Endothelial cell of umbilical vein (primary cell): ENCODE measurements at regions of chr13 and their contacts with region 1.

Region 1: DNA sequence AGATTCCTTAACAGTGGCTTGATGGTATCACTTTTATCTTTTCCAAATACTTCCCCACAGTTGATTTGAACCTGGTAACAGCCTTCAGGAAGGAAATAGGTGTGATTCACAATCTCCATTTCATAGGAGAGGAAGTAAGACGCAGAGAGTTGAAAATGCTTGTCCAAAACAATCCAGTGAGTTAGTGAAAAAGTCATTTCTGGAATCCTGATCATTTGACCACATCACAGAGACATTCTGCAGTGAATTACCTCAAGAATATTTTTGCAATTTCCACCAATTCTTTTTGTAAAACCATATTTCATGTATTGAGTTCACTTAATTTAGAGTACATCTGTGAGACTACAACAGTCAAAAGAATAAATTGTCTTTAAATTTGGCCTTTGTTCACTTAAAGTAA is 292.8 kb downstream of the DCLK1 start:
- DNase-seq: peak; percentile 89
- H3K4me3 ChIP-seq: peak overlapping the region in 1 of 3 experiments; percentile 23
- H3K27ac ChIP-seq: peak overlapping the region; percentile 98
- H3K4me1 ChIP-seq: peaks cover 27% of the 10 kb centered on the region
- H3K27me3 ChIP-seq: no peaks in the 10 kb centered on the region
- CTCF ChIP-seq: no peak
- POLR2A ChIP-seq: peak; percentile 27

Region 2: GRCh38 chr13:35393886-35394285 is 444.5 kb before region 1 on chr13:
- CTCF ChIA-PET with region 1: no interaction called
- POLR2A ChIA-PET with region 1: no interaction called
- dilution Hi-C with region 1: no loop called
- intact Hi-C with region 1: loop called (anchors 10 kb)
- DNase-seq: peak; percentile 79
- H3K4me3 ChIP-seq: no peak overlapping the region
- H3K27ac ChIP-seq: no peak overlapping the region
- H3K4me1 ChIP-seq: peaks cover 34% of the 10 kb centered on the region
- H3K27me3 ChIP-seq: no peaks in the 10 kb centered on the region
- CTCF ChIP-seq: no peak
- POLR2A ChIP-seq: no peak

Region 3: DNA sequence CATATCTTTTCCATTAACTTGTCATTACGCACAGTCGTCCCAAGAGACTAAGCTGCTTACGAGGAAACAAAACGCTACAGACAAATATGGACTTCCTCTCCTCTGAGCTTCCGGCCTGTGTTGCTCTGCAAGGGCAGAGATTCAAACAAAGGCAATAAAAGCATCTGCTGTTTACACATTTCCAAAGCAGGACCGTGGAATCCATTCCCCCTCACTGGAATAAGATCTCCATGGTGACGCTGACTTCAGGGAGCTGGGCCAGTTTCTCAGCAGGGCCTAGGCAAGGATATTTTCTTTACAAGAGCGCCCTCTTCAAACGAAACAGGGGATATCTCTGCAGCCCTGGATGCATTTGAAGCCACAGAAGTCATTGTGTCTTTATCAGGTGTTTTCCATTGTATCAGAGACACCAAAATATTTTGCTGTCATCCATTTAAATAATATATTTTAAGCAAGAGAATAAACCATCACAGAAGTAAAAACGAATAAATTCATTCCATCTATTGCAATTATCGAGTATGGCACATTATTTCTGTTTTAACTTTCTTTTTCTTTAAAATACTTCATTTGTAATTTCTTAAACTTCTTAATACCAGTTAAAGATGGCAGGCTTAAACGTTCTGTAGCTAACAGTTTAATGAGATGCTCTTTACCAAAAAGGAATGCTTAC is 115.3 kb after region 1 on chr13:
- CTCF ChIA-PET with region 1: no interaction called
- POLR2A ChIA-PET with region 1: no interaction called
- dilution Hi-C with region 1: no loop called
- intact Hi-C with region 1: loop called (anchors 5 kb)
- DNase-seq: peak; percentile 79
- H3K4me3 ChIP-seq: no peak overlapping the region
- H3K27ac ChIP-seq: no peak overlapping the region
- H3K4me1 ChIP-seq: no peaks in the 10 kb centered on the region
- H3K27me3 ChIP-seq: no peaks in the 10 kb centered on the region
- CTCF ChIP-seq: peak; percentile 54 to 57
- POLR2A ChIP-seq: no peak

Region 4: GRCh38 chr13:36148446-36148845 is 310.1 kb after region 1 on chr13:
- CTCF ChIA-PET with region 1: no interaction called
- POLR2A ChIA-PET with region 1: no interaction called
- dilution Hi-C with region 1: no loop called
- intact Hi-C with region 1: loop called (anchors 1 kb)
- DNase-seq: no peak
- H3K4me3 ChIP-seq: no peak overlapping the region
- H3K27ac ChIP-seq: no peak overlapping the region
- H3K4me1 ChIP-seq: peaks cover 5% of the 10 kb centered on the region
- H3K27me3 ChIP-seq: peaks cover 0 to 2% of the 10 kb centered on the region in 2 experiments
- CTCF ChIP-seq: no peak
- POLR2A ChIP-seq: no peak